ENCODE measurements at regions of chr6 and their contacts with region 1.

Region 1: GRCh38 chr6:35139908-35140655 is 1.1 kb downstream of the TCP11 start:
- DNase-seq: peak in 4 of 5 donors; percentile 36 to 44 (median 37)
- H3K4me3 ChIP-seq: no peak overlapping the region
- H3K4me3 Mint-ChIP-seq: peak overlapping the region in 7 of 8 donors; percentile 13 to 82 (median 49)
- H3K27ac ChIP-seq: no peak overlapping the region
- H3K27ac Mint-ChIP-seq: peak overlapping the region in 2 of 7 donors; percentile 43 to 63
- H3K4me1 ChIP-seq: peaks cover 15% of the 10 kb centered on the region
- H3K4me1 Mint-ChIP-seq: peaks cover 8 to 14% (median 10%) of the 10 kb centered on the region in 4 donors
- H3K27me3 ChIP-seq: peaks cover 7% of the 10 kb centered on the region
- H3K27me3 Mint-ChIP-seq: peaks cover 7 to 12% of the 10 kb centered on the region in 2 donors

Region 2: DNA sequence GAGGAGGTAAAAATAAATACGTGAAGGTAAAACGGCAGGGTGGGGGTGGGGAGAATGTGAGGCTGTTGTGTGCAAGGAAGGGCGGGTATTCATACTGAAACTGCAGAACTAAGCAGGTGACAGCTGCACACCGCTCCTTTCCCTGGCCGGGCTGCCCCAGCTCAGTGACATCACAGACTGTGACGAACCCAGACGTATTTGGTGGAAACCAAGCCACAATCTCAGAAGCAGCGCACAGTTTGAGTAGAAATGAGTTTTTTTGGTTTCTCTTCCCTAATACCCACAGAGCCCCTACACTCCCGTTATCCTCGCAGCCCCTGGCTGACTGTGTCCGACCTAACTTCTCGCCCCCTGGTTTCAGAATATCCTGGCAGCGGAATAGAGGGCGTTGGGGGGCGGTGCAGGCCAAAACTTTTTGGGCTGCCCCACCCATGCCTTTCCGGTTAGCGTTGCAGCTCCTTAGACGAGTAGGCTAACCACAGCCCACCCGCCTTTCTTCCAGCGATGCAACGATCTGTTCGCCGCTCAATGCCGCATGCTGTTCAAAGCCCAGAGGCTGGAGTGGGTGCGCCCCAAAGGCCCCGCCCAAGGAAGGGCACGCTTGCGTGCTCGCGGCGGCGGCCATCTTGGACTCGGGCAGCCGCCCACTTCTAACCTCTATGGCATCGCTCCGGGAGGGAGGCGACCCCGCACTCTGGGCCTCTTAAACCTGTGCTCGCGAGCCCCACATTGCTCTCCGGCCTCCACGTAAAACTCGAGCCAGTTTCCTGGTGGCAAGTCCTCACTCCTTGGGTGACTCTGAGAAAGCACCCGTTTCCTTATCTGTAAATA is 1569.1 kb before region 1 on chr6:
- CTCF ChIA-PET with region 1: no interaction called
- POLR2A ChIA-PET with region 1: no interaction called
- intact Hi-C with region 1: no loop called
- DNase-seq: peak; percentile 92 to 98 (median 95)
- H3K4me3 ChIP-seq: peak overlapping the region; percentile 13 to 72
- H3K4me3 Mint-ChIP-seq: peak overlapping the region; percentile 90 to 97 (median 94)
- H3K27ac ChIP-seq: peak overlapping the region; percentile 93
- H3K27ac Mint-ChIP-seq: peak overlapping the region; percentile 99 to 100 (median 100)
- H3K4me1 ChIP-seq: peaks cover 23% of the 10 kb centered on the region
- H3K4me1 Mint-ChIP-seq: peaks cover 12 to 44% (median 31%) of the 10 kb centered on the region in 4 donors
- H3K27me3 ChIP-seq: no peaks in the 10 kb centered on the region
- H3K27me3 Mint-ChIP-seq: no peaks in the 10 kb centered on the region

Region 3: DNA sequence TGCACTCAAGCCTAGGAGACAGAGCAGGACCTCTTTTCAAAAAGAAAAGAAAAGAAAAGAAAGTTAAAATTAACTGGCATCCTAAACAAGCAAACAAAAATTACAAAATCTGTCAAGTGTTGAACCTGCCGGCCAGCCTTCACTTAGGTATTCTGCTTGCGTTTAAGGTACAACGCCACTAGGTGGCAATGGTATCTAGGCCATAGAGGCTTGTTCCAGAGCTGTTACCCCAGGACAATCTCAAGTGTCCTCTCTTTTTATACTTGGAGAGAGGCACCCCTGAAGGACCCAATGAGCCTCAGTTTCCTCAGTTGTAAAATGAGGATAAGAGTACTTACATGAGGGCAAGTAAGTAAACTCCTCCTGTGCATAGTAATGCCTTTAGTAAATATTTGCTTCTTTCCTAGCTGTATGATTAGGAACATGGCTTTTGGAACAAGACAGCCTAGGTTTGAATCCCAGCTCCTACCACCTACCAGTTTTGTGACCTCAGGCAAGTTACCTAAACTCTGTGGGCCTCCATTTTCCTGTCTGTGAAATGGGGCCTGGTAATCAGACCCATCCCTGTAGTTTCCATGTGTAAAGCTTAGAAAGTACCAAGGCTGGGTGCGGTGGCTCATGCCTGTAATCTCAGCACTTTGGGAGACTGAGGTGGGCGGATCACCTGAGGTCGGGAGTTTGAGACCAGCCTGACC is 680.0 kb before region 1 on chr6:
- CTCF ChIA-PET with region 1: interaction called, 20 read pairs
- POLR2A ChIA-PET with region 1: interaction called, 3 read pairs
- intact Hi-C with region 1: no loop called
- DNase-seq: peak; percentile 48 to 56 (median 52)
- H3K4me3 ChIP-seq: no peak overlapping the region
- H3K4me3 Mint-ChIP-seq: no peak overlapping the region
- H3K27ac ChIP-seq: no peak overlapping the region
- H3K27ac Mint-ChIP-seq: no peak overlapping the region
- H3K4me1 ChIP-seq: no peaks in the 10 kb centered on the region
- H3K4me1 Mint-ChIP-seq: peaks cover 0 to under 1% (median under 1%) of the 10 kb centered on the region in 4 donors
- H3K27me3 ChIP-seq: peaks cover under 1% of the 10 kb centered on the region
- H3K27me3 Mint-ChIP-seq: peaks cover 8% of the 10 kb centered on the region in 2 donors

Region 4: DNA sequence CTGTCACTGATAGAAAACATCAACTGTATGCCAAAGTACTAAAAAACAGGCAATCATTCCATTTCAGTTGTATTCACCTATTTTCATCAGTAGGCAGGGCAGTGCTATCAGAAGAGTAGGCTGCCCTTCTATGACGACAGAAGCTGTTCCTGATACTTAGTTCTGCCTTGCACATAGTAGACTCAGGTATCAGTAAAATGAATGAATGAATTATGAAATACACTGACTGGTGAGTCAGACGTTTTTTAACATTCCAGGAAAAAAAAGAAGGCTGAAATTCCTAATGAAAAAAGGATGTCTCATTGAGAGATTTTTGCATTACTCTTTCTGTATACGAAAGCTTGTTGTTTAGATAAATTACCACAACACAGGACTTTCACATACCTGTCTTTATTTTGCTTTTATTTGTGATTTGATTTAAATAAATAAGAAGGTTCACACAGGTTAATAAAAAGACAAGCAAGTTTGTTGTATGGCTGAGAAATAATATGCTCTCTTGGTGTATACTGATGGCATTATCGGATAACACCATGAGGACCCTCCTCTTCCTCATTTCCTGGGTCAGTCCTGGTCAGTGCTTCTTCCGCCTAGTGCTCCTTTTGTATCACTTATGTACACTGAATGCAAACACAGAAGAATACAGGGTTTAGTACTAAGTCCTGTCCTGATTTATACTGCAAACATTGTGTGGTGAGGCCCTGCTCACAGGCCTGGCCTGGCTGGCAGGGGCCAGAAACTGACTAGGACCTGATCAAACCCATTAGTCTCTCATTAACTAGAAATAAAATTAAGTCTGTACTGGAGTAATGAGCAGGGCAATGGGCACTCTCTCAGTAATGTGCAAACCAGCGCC is 544.5 kb before region 1 on chr6:
- CTCF ChIA-PET with region 1: no interaction called
- POLR2A ChIA-PET with region 1: no interaction called
- intact Hi-C with region 1: loop called (anchors 10 kb)
- DNase-seq: no peak
- H3K4me3 ChIP-seq: no peak overlapping the region
- H3K4me3 Mint-ChIP-seq: no peak overlapping the region
- H3K27ac ChIP-seq: no peak overlapping the region
- H3K27ac Mint-ChIP-seq: peak overlapping the region in 2 of 7 donors; percentile 25 to 80
- H3K4me1 ChIP-seq: peaks cover 23% of the 10 kb centered on the region
- H3K4me1 Mint-ChIP-seq: peaks cover 40 to 66% (median 54%) of the 10 kb centered on the region in 4 donors
- H3K27me3 ChIP-seq: no peaks in the 10 kb centered on the region
- H3K27me3 Mint-ChIP-seq: no peaks in the 10 kb centered on the region

Region 5: DNA sequence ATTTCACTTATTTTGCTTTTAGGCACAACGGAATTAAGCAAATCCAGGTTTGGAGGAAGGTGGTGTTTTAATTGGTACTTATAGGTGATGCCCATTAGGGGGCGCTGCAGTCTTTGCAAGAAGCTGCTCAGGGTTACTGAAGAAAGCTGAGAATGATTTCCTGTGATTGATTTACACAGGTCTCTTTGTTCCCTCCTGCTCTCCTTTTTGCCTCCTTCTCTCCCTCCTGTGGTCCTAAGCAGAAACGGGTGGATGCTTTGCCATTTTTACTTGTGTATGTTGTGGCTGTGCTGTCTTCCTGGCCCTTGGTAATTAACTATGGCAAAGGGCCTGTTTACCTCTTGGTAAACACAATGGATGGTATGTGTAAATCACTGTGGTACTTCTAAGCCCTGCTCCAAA is 153.2 kb before region 1 on chr6:
- CTCF ChIA-PET with region 1: interaction called, 14 read pairs
- POLR2A ChIA-PET with region 1: no interaction called
- intact Hi-C with region 1: loop called (anchors 1 kb)
- DNase-seq: peak; percentile 45 to 60 (median 52)
- H3K4me3 ChIP-seq: no peak overlapping the region
- H3K4me3 Mint-ChIP-seq: no peak overlapping the region
- H3K27ac ChIP-seq: no peak overlapping the region
- H3K27ac Mint-ChIP-seq: no peak overlapping the region
- H3K4me1 ChIP-seq: no peaks in the 10 kb centered on the region
- H3K4me1 Mint-ChIP-seq: no peaks in the 10 kb centered on the region
- H3K27me3 ChIP-seq: no peaks in the 10 kb centered on the region
- H3K27me3 Mint-ChIP-seq: no peaks in the 10 kb centered on the region

Region 6: DNA sequence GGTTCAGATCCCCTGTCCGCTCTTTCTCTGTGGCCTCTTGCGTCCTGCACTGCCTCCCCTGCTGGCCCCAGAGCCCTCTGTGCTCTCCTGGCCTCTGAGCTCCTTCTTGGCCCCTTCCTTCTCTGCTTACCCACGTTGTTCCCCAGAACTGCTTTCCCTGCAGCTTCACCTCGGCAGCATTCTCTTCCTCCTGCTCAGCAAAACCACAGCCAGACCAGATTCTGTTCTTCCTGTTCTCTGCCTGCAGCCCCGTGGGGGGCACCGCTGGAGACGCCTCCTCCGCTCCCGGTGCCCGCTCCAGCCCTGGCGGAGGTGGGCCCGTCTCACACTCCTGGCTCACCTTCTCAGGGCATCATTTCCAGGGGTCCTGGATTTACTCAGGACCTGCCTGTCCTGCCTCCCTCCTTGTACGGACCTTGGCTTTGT is 58.6 kb before region 1 on chr6:
- CTCF ChIA-PET with region 1: no interaction called
- POLR2A ChIA-PET with region 1: no interaction called
- intact Hi-C with region 1: no loop called
- DNase-seq: no peak
- H3K4me3 ChIP-seq: no peak overlapping the region
- H3K4me3 Mint-ChIP-seq: no peak overlapping the region
- H3K27ac ChIP-seq: no peak overlapping the region
- H3K27ac Mint-ChIP-seq: no peak overlapping the region
- H3K4me1 ChIP-seq: no peaks in the 10 kb centered on the region
- H3K4me1 Mint-ChIP-seq: peaks cover 0 to 1% (median 0%) of the 10 kb centered on the region in 4 donors
- H3K27me3 ChIP-seq: no peaks in the 10 kb centered on the region
- H3K27me3 Mint-ChIP-seq: no peaks in the 10 kb centered on the region

Region 7: DNA sequence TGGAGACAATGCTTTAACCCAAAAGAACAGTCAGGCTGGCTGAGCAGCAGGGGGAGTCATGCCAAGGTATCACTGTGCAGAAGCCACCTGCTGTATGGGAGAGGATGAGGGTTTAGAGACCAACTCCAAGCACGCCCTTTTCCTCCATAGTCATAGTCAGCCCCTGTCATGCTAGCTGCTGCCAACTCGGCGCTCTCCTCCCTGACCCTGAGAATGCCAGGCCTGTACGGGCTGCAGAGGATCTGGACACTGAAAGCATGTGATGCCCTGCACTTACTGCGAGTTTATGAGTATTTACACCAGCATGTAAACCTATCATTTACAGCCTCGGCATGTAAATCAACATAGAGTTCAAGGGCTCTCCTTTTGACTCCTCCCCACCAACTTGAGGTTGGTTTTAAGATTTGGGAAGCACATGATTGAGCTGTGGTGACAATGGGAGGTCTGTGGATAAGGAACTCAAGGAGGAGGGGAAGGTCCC is 62.0 kb after region 1 on chr6:
- CTCF ChIA-PET with region 1: interaction called, 10 read pairs
- POLR2A ChIA-PET with region 1: no interaction called
- intact Hi-C with region 1: no loop called
- DNase-seq: no peak
- H3K4me3 ChIP-seq: no peak overlapping the region
- H3K4me3 Mint-ChIP-seq: no peak overlapping the region
- H3K27ac ChIP-seq: no peak overlapping the region
- H3K27ac Mint-ChIP-seq: no peak overlapping the region
- H3K4me1 ChIP-seq: no peaks in the 10 kb centered on the region
- H3K4me1 Mint-ChIP-seq: peaks cover 0 to 2% (median 0%) of the 10 kb centered on the region in 4 donors
- H3K27me3 ChIP-seq: peaks cover 19% of the 10 kb centered on the region
- H3K27me3 Mint-ChIP-seq: peaks cover 32 to 54% of the 10 kb centered on the region in 2 donors

Measured in CD4-positive, alpha-beta memory T cell (primary cell).